MCF 10A (cell line): ENCODE measurements at regions of chr10 and their contacts with region 1.

Region 1: GRCh38 chr10:99560277-99561126 is 27.8 kb downstream of the NKX2-3 start:
- DNase-seq: peak; percentile 79
- H3K4me3 Mint-ChIP-seq: no peak overlapping the region
- H3K27ac Mint-ChIP-seq: no peak overlapping the region
- H3K4me1 Mint-ChIP-seq: no peaks in the 10 kb centered on the region
- H3K27me3 Mint-ChIP-seq: peaks cover under 1% of the 10 kb centered on the region
- CTCF ChIP-seq: peak; percentile 79

Region 2: GRCh38 chr10:99548041-99548530 is 12.4 kb before region 1 on chr10:
- CTCF ChIA-PET with region 1: interaction called, 32 read pairs
- POLR2A ChIA-PET with region 1: no interaction called
- intact Hi-C with region 1: no loop called
- DNase-seq: peak; percentile 43
- H3K4me3 Mint-ChIP-seq: no peak overlapping the region
- H3K27ac Mint-ChIP-seq: no peak overlapping the region
- H3K4me1 Mint-ChIP-seq: peaks cover 8% of the 10 kb centered on the region
- H3K27me3 Mint-ChIP-seq: peaks cover 60% of the 10 kb centered on the region
- CTCF ChIP-seq: no peak

Region 3: DNA sequence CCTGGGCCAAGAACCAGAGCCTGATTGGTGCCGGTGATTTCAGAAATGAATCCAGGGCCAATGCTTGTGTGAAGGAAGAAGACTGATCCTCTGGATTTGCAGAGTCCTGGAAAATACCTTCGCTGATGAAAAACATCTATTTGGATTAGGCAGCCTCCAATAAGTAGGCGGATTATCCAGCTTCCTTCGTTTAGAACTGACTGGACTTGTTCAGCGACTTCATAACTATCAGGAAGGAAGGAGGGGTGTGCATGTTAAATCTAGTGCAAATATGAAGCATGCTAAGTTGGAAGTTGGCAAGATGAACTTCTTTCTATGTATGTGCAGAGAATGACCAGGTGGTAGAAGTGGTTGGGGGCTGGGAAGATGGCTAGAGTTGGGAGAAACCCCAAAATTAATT is 13.3 kb after region 1 on chr10:
- CTCF ChIA-PET with region 1: interaction called, 18 read pairs
- POLR2A ChIA-PET with region 1: no interaction called
- intact Hi-C with region 1: no loop called
- DNase-seq: no peak
- H3K4me3 Mint-ChIP-seq: no peak overlapping the region
- H3K27ac Mint-ChIP-seq: no peak overlapping the region
- H3K4me1 Mint-ChIP-seq: no peaks in the 10 kb centered on the region
- H3K27me3 Mint-ChIP-seq: peaks cover 21% of the 10 kb centered on the region
- CTCF ChIP-seq: no peak